BJ (cell line): ENCODE measurements at regions of chr1 and their contacts with region 1.

Region 1: DNA sequence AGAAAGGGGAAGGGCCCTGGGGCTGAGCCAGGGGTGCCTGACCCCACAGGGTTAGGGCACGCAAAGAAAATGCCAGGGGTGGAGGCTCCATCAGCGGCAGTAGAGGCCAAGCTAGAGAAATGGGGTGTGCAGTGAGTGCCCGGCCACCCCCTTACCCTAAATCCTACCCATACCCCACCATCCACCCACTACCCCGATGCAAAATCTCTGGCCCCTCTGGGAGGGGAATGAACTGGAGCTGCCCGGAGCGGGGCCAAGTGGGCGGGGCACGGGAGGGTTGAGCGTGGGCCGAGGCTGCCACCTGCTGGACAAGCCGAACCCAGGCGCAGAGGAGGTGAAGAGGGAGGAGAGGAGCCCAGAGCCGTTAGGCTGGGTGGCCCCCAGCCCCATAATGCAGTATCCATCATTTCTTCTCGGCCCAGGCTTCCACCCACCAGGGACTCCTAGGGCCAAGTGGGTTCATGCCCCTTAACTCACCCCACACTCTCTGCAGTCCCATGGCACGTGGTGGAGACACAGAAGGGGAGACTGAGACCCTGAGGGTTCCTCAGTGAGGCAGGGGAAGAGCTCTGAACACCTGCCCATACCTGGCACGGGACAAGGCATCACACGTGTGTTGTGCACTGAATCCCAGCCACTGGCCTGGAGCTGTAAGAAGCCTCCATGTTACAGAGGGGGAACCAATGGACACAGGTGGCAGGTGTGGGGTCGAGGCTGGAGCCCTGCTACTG is 1.4 kb upstream of the C1QC start:
- DNase-seq: no peak
- H3K4me3 ChIP-seq: no peak overlapping the region
- H3K27me3 ChIP-seq: 0 out of 2 replicates have a peak, but pooled peaks cover 2% of the 10 kb centered on the region
- CTCF ChIP-seq: peak; percentile 97

Region 2: GRCh38 chr1:22654692-22655091 is 12.6 kb after region 1 on chr1:
- CTCF ChIA-PET with region 1: interaction called, 11 read pairs
- POLR2A ChIA-PET with region 1: no interaction called
- DNase-seq: no peak
- H3K4me3 ChIP-seq: no peak overlapping the region
- H3K27me3 ChIP-seq: peaks cover 27% of the 10 kb centered on the region
- CTCF ChIP-seq: no peak

Region 3: GRCh38 chr1:22808676-22809483 is 166.8 kb after region 1 on chr1:
- CTCF ChIA-PET with region 1: no interaction called
- POLR2A ChIA-PET with region 1: no interaction called
- DNase-seq: peak; percentile 44
- H3K4me3 ChIP-seq: no peak overlapping the region
- H3K27me3 ChIP-seq: no peaks in the 10 kb centered on the region
- CTCF ChIP-seq: no peak